ENCODE measurements at regions of chr7 and their contacts with region 1.

Region 1: GRCh38 chr7:1193593-1194424 is 33.8 kb upstream of the ZFAND2A start:
- DNase-seq: no peak
- ATAC-seq: peak; percentile 74
- H3K4me3 ChIP-seq: no peak overlapping the region
- H3K27ac ChIP-seq: no peak overlapping the region
- H3K4me1 ChIP-seq: no peaks in the 10 kb centered on the region
- H3K27me3 ChIP-seq: no peaks in the 10 kb centered on the region; a peak in 1 of 4 replicates
- CTCF ChIP-seq: peak in 1 of 3 experiments; percentile 29; a peak in 2 of 6 replicates
- EP300 ChIP-seq: no peak
- POLR2A ChIP-seq: no peak
- RAD21 ChIP-seq: no peak

Region 2: DNA sequence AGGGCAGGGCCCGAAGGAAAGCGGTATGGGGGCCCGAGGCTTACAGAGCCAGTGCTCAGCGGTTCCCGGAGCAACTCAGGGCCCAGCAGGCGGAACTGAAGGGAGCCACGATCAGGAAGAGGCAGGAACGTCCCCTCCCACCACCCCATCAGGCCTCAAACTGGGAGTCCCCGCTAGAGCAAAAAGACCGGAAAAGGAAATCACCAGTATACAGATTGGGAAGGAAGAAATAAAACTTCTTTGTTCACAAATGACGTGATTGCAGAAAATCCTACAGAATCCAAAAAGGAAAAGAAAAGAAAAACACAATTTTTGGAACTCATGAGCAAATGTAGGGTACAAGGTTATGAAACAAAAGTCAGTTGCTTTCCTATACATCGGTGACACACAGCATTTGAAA is 12.2 kb before region 1 on chr7:
- CTCF ChIA-PET with region 1: interaction called, 13 read pairs
- POLR2A ChIA-PET with region 1: no interaction called
- RAD21 ChIA-PET with region 1: interaction called, 3 read pairs
- SMC1A ChIA-PET with region 1: no interaction called
- in situ Hi-C with region 1: no loop called
- intact Hi-C with region 1: no loop called
- DNase-seq: no peak
- ATAC-seq: no peak
- H3K4me3 ChIP-seq: no peak overlapping the region
- H3K27ac ChIP-seq: no peak overlapping the region
- H3K4me1 ChIP-seq: no peaks in the 10 kb centered on the region
- H3K27me3 ChIP-seq: peaks cover 0 to 2% of the 10 kb centered on the region in 2 experiments; a peak in 1 of 4 replicates
- CTCF ChIP-seq: no peak
- EP300 ChIP-seq: no peak
- POLR2A ChIP-seq: no peak
- RAD21 ChIP-seq: no peak